Heart right ventricle (tissue), 16 donors: ENCODE measurements at regions of chr4 and their contacts with region 1.

Region 1: GRCh38 chr4:118918388-118918787 is 29.7 kb downstream of the SYNPO2 start:
- DNase-seq: no peak
- ATAC-seq: peak in 2 of 8 donors; percentile 30 to 31
- H3K4me3 ChIP-seq: peak overlapping the region in 2 of 10 donors; percentile 2 to 7
- H3K27ac ChIP-seq: peak overlapping the region in 8 of 10 donors; percentile 61 to 89 (median 76)
- H3K4me1 ChIP-seq: peaks cover 10 to 75% (median 50%) of the 10 kb centered on the region in 9 donors
- H3K27me3 ChIP-seq: no peaks in the 10 kb centered on the region
- CTCF ChIP-seq: no peak

Region 2: DNA sequence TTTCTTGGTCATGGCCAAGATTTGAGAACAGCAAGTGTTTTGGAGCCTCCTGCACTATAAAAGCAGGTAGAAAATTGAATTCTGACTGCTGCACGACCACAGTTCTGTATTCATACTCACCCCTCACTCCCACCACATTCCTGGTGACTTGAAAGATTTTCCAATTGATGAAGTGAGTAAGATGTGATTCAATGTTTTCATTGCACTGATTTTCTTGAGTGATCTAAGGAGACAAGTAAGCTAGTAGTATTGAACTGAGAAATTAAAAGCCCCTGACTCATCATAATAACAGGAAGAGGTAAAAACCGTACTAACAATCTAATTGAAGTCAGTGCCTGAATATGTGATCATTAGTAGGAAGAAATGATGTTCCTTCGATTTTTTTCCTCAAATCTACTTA is 76.3 kb before region 1 on chr4:
- intact Hi-C with region 1: no loop called
- DNase-seq: no peak
- ATAC-seq: no peak
- H3K4me3 ChIP-seq: no peak overlapping the region
- H3K27ac ChIP-seq: no peak overlapping the region
- H3K4me1 ChIP-seq: no peaks in the 10 kb centered on the region
- H3K27me3 ChIP-seq: no peaks in the 10 kb centered on the region
- CTCF ChIP-seq: no peak

Region 3: GRCh38 chr4:118905566-118905965 is 12.8 kb before region 1 on chr4:
- intact Hi-C with region 1: loop called in 1 of 10 experiments (anchors 2 kb)
- DNase-seq: no peak
- ATAC-seq: peak in 6 of 8 donors; percentile 14 to 65 (median 25)
- H3K4me3 ChIP-seq: no peak overlapping the region
- H3K27ac ChIP-seq: peak overlapping the region in 9 of 10 donors; percentile 4 to 89 (median 68)
- H3K4me1 ChIP-seq: peaks cover 4 to 87% (median 54%) of the 10 kb centered on the region in 9 donors
- H3K27me3 ChIP-seq: no peaks in the 10 kb centered on the region
- CTCF ChIP-seq: no peak